ENCODE measurements at regions of chr7 and their contacts with region 1.

Region 1: GRCh38 chr7:47179812-47180515 is 401.9 kb downstream of the TNS3 start:
- DNase-seq: peak; percentile 45
- CTCF ChIP-seq: peak; percentile 64

Region 2: DNA sequence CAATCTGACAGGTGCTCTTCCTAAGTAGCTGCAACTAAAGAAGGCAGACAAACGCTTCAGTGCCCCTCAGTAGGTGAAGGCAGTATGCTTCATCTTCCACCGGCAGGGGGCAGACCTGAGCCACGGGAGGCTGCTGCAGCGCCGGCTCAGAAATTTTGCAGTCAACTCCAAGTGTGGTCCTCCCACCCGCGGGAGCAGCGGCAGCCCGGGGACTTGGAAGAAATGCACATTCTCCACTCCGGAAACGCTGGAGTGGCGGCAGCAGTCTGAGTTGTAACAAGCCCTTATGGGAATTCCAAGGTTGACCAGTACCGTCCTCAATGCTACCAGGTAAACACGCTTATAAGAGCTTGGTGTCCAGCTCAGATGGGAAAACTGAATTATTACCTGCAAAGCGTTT is 1262.3 kb before region 1 on chr7:
- CTCF ChIA-PET with region 1: interaction called, 10 read pairs
- POLR2A ChIA-PET with region 1: no interaction called
- DNase-seq: peak; percentile 82
- CTCF ChIP-seq: peak; percentile 81

Region 3: DNA sequence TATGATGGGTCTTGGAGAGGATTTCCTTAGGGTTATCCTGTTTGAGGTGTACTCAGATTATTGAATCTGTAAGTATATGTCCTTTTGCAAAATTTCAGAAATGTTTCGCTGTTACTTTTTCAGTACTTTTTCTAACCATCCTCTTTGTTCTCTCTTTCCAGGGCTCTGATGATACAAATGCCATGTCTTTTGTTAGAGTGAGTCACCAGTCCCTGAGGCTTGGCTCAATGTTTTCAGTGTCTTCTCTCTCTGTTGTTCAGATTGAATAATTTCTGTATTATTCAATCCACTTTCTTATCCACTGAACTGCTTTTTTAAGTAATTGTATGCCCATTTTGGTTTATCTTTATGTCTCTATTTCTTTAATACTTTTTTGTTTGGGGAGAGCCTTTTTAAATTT is 47.5 kb before region 1 on chr7:
- CTCF ChIA-PET with region 1: no interaction called
- POLR2A ChIA-PET with region 1: no interaction called
- DNase-seq: no peak
- CTCF ChIP-seq: no peak

Region 4: DNA sequence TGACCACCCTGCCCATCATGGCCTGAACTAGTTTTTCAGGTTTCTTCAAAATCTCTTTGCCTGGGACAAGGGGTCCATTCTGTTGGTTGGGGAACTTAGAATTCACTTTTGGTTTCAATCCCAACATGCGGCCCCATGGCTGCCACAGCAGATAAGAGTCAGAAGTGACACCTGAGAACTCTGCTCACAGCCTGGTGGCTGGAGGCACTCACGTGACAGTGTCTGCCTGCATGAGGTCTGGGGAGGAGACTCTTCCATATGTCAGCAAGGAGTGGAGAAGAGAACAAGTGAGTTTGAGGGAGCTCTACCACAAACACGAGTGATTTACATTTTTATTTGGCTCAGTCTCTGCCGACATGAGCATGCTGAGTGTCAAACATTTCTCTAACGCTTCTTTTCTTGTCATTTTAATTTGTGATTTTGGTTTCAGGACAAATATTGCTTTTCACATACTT is 31.6 kb after region 1 on chr7:
- CTCF ChIA-PET with region 1: no interaction called
- POLR2A ChIA-PET with region 1: no interaction called
- DNase-seq: no peak
- CTCF ChIP-seq: no peak

Region 5: GRCh38 chr7:47361746-47362215 is 181.8 kb after region 1 on chr7:
- CTCF ChIA-PET with region 1: no interaction called
- POLR2A ChIA-PET with region 1: no interaction called
- DNase-seq: no peak
- CTCF ChIP-seq: no peak

Region 6: GRCh38 chr7:47497367-47498096 is 317.6 kb after region 1 on chr7:
- CTCF ChIA-PET with region 1: no interaction called
- POLR2A ChIA-PET with region 1: no interaction called
- DNase-seq: peak; percentile 71
- CTCF ChIP-seq: no peak